Activated B cell treated with CpG ODN at 0.5 μM for 24 hours (primary cell): ENCODE measurements at regions of chr20 and their contacts with region 1.

Region 1: DNA sequence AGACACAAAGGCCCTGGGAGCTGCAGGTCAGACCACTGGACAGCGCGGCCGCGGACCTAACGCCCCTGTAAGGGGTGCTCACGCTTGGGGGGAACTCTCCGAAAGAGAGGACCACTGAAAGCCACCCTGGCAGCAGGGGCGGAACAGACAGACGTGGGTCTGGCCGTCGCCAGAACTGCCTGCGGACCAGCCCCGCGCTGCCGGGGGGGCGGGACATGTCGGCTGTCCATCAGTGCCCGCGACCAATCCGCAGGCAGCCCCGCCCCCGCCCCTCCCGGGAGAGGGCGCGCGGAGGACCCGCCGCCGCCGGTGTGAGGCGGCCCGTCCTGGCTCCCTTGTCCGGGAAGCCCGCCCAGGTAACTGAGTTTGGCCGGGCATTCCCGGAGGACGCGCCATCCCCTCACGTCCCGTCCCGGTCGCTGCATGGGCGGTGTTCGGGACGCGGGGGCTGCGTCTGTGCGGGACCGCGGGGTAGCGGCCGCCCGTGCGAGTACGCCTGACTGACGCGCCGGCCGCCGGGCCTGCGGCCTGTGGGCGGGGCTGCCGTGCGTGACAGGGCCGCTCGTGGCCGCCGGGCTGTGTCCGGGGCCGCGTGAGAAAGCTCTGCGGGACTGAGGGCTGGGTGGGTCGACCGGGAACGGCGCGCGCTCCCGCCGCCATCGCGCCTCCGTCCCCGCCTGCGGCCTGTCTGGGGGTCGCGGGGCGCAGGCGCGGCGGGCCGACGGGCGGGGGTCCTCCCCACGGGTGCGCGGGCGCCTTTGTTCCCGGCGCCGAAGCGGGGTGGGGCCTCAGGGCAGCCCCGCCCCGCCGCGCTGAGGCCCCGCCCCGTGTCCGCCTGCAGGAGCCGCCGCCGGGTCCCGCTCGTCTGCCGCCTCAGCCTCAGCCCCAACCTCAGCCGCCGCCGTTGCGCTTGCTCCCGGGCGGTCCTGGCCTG is at the start of gene PLCG1:
- DNase-seq: peak; percentile 84
- ATAC-seq: peak; percentile 73
- H3K4me3 Mint-ChIP-seq: peak within 1 kb of the TSS; percentile 84
- H3K27ac Mint-ChIP-seq: peak within 1 kb of the TSS; percentile 78
- H3K4me1 Mint-ChIP-seq: peaks cover 69% of the 10 kb centered on the region
- H3K27me3 Mint-ChIP-seq: no peaks in the 10 kb centered on the region
- CTCF ChIP-seq: no peak
- total RNA-seq, gene PLCG1: 61.1 and 61.8 TPM in 2 replicates

Region 2: DNA sequence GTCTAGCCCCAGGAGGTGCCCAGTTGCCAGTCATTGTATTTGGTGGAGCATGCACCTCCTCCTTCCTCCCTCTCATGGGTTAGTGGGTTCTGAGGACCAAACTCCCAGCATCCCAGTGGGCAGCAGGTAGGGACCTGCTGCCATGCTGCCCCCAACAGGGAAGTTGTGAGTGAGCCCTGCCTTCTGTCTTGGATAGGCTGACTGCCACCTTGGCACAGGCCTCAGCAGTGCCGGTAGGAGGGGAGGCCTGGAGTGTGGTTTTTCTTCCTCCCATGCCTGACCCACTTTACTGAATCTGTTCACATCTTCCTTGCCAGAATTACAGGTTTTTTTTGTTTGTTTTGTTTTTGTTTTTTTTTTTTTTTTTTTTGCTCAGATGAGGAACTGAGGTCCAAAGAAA is 24.9 kb after region 1 on chr20:
- CTCF ChIA-PET with region 1: interaction called, 44 read pairs
- POLR2A ChIA-PET with region 1: interaction called, 47 read pairs
- intact Hi-C with region 1: loop called (anchors 1 kb)
- DNase-seq: no peak
- ATAC-seq: no peak
- H3K4me3 Mint-ChIP-seq: no peak overlapping the region
- H3K27ac Mint-ChIP-seq: no peak overlapping the region
- H3K4me1 Mint-ChIP-seq: peaks cover 34% of the 10 kb centered on the region
- H3K27me3 Mint-ChIP-seq: no peaks in the 10 kb centered on the region
- CTCF ChIP-seq: no peak

Region 3: GRCh38 chr20:41185013-41185757 is 48.2 kb after region 1 on chr20:
- CTCF ChIA-PET with region 1: no interaction called
- POLR2A ChIA-PET with region 1: no interaction called
- intact Hi-C with region 1: no loop called
- DNase-seq: no peak
- ATAC-seq: no peak
- H3K4me3 Mint-ChIP-seq: no peak overlapping the region
- H3K27ac Mint-ChIP-seq: no peak overlapping the region
- H3K4me1 Mint-ChIP-seq: no peaks in the 10 kb centered on the region
- H3K27me3 Mint-ChIP-seq: no peaks in the 10 kb centered on the region
- CTCF ChIP-seq: no peak

Region 4: DNA sequence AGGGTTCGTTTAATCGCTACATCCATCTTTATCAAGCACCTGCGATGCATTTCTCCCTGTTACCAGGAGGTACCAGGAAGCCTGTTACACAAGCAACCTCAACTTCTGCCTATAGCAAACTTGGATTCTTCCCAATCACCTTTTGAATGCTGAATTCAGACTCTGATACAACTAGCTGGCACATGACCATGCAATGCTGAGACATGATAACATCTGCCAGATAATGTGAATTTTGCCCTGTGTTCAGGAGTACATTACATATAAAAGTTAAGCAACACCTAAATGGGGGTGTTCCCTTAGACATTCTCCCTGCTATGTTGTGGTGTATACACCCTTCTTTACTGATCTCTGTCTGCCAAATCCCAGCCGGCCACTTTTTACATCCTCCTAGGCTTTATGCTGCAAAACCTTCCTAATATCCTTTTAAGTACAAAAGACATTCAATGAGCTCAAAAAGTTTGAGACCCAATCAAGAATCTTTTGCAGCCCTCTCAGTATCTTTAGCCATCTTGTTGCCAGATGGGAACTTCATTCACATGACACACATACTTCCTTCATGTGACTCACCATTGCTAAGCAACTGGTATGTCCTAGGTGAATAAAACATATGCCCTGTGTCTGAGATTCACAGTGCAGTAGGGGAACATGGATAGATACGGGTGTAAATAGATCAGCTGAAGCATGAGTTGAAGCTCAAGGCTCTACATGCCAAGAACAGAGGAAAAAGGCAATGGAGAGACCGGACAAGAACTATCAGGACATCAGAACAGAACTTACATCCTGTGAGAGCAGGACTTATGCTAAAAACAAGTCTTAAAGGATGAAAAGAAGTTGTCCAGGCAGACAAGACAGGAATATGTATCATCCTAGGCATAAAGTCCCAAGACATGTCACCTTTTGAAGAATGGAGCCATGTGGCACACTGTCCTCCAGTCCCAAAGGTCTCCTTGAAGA is 96.3 kb after region 1 on chr20:
- CTCF ChIA-PET with region 1: interaction called, 51 read pairs
- POLR2A ChIA-PET with region 1: interaction called, 4 read pairs
- intact Hi-C with region 1: loop called (anchors 1 kb)
- DNase-seq: no peak
- ATAC-seq: peak; percentile 56
- H3K4me3 Mint-ChIP-seq: no peak overlapping the region
- H3K27ac Mint-ChIP-seq: peak overlapping the region; percentile 36
- H3K4me1 Mint-ChIP-seq: peaks cover 26% of the 10 kb centered on the region
- H3K27me3 Mint-ChIP-seq: no peaks in the 10 kb centered on the region
- CTCF ChIP-seq: no peak

Region 5: GRCh38 chr20:41317536-41318270 is 180.8 kb after region 1 on chr20 and contains the start of gene ZHX3:
- CTCF ChIA-PET with region 1: no interaction called
- POLR2A ChIA-PET with region 1: no interaction called
- intact Hi-C with region 1: loop called (anchors 1 kb)
- DNase-seq: peak; percentile 99
- ATAC-seq: peak; percentile 97
- H3K4me3 Mint-ChIP-seq: peak within 1 kb of the TSS; percentile 91
- H3K27ac Mint-ChIP-seq: peak within 1 kb of the TSS; percentile 87
- H3K4me1 Mint-ChIP-seq: peaks cover 23% of the 10 kb centered on the region
- H3K27me3 Mint-ChIP-seq: no peaks in the 10 kb centered on the region
- CTCF ChIP-seq: no peak
- total RNA-seq, gene ZHX3: 19.5 and 21.2 TPM in 2 replicates

Region 6: GRCh38 chr20:41693136-41693979 is 556.4 kb after region 1 on chr20:
- CTCF ChIA-PET with region 1: no interaction called
- POLR2A ChIA-PET with region 1: no interaction called
- intact Hi-C with region 1: loop called (anchors 2 kb)
- DNase-seq: peak; percentile 63
- ATAC-seq: peak; percentile 84
- H3K4me3 Mint-ChIP-seq: peak overlapping the region; percentile 92
- H3K27ac Mint-ChIP-seq: peak overlapping the region; percentile 90
- H3K4me1 Mint-ChIP-seq: peaks cover 17% of the 10 kb centered on the region
- H3K27me3 Mint-ChIP-seq: peaks cover 4% of the 10 kb centered on the region
- CTCF ChIP-seq: no peak